WTC11 (cell line): ENCODE measurements at regions of chr19 and their contacts with region 1.

Region 1: DNA sequence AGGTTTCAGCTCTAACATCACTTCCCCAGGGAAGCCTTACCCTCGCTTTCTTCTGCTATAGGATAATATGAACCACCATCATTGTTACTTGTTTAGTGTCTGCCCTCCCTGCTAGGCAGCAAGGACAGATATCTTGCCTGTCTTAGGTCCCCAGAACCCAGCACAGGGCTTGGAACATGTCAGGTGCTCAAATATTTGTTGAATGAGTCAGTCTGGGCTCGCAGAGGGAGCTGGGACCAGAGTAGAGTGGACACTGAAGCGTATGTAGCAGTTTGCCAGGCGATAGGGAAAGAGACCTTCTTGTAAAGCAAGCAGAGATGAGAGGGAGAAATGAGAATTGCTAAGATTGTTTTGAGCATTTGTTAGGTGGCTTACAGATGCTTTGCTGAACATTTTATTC is 11.7 kb downstream of the BCKDHA start:
- DNase-seq: no peak
- ATAC-seq: no peak
- H3K4me3 Mint-ChIP-seq: no peak overlapping the region
- H3K27ac Mint-ChIP-seq: peak overlapping the region; percentile 22; the same call in 1 of the 2 replicates
- H3K4me1 Mint-ChIP-seq: peaks cover 13% of the 10 kb centered on the region
- H3K27me3 Mint-ChIP-seq: no peaks in the 10 kb centered on the region
- CTCF ChIP-seq: no peak

Region 2: DNA sequence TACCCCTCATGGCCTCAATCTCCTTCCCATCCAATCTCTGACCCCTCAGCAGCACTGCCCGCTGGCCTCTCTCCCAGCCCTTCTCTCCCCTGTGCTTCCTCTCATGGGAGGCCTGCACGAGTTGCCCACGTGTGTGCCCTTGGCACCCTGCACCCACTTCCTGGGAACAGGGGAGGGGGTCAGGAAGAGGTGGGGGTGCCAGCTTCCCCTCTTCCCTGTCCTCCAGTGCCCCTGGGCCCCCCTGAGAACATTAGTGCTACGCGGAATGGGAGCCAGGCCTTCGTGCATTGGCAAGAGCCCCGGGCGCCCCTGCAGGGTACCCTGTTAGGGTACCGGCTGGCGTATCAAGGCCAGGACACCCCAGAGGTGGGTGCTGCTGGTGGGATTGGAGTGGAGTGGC is 171.0 kb before region 1 on chr19:
- CTCF ChIA-PET with region 1: no interaction called
- POLR2A ChIA-PET with region 1: no interaction called
- DNase-seq: no peak
- ATAC-seq: no peak
- H3K4me3 Mint-ChIP-seq: no peak overlapping the region
- H3K27ac Mint-ChIP-seq: no peak overlapping the region
- H3K4me1 Mint-ChIP-seq: no peaks in the 10 kb centered on the region
- H3K27me3 Mint-ChIP-seq: no peaks in the 10 kb centered on the region
- CTCF ChIP-seq: no peak

Region 3: DNA sequence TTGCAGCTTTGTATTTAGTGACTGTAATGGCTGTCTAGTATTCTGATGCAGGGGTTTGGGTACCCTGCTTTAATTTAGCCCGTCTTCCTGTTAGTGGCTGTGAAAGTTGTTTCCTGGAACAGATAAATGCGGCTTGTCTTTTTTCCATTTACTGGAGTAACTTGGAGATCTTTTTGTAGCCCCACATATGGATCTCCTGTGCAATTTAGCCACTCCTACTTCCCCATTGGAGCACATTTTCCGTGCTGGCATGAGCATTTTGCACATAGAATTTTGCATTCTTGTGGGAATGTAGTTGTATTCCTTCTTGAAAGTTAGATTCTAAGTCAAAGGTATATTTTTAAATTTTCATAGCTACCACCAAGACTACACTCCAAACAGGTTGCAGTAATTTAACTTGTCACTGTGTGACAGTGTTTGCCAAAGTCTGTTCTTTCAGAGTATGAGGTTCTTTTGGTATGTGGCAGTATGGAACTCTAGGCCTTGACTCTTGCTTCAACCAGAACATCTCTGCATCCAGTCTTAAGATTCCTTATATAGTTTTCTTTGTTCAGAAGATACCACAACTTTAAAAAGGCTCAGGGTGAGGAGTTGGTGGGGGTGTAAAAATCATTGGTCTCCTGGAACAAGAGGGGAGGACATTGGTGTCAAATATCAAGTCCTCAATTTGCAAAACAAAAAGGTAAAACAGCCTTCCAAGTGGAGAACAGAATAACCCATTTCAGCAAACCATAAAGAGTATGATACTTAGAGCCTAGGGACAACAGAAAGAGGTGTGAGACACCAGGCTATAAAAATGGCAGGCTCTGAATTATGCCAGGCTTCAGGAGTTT is 120.4 kb before region 1 on chr19:
- CTCF ChIA-PET with region 1: no interaction called
- POLR2A ChIA-PET with region 1: no interaction called
- DNase-seq: no peak
- ATAC-seq: peak; percentile 55
- H3K4me3 Mint-ChIP-seq: peak overlapping the region; percentile 34
- H3K27ac Mint-ChIP-seq: peak overlapping the region; percentile 79
- H3K4me1 Mint-ChIP-seq: peaks cover 26% of the 10 kb centered on the region
- H3K27me3 Mint-ChIP-seq: no peaks in the 10 kb centered on the region
- CTCF ChIP-seq: no peak

Region 4: GRCh38 chr19:41439441-41440222 is 30.3 kb after region 1 on chr19 and contains the start of gene DMAC2:
- CTCF ChIA-PET with region 1: interaction called, 14 read pairs
- POLR2A ChIA-PET with region 1: interaction called, 10 read pairs
- DNase-seq: peak; percentile 97
- ATAC-seq: peak; percentile 98
- H3K4me3 Mint-ChIP-seq: no peak within 1 kb of the TSS
- H3K27ac Mint-ChIP-seq: no peak within 1 kb of the TSS
- H3K4me1 Mint-ChIP-seq: peaks cover 13% of the 10 kb centered on the region
- H3K27me3 Mint-ChIP-seq: peaks cover 17% of the 10 kb centered on the region; the same call in 1 of the 2 replicates
- CTCF ChIP-seq: no peak
- total RNA-seq, gene DMAC2: 77.6 to 85.6 TPM (median 82.6 TPM) in 3 replicates